Endothelial cell of umbilical vein (primary cell): ENCODE measurements at regions of chr2 and their contacts with region 1.

Region 1: GRCh38 chr2:159124441-159124911 is 156.0 kb downstream of the TANC1 start:
- DNase-seq: peak; percentile 92
- H3K4me3 ChIP-seq: no peak overlapping the region
- H3K27ac ChIP-seq: peak overlapping the region; percentile 84
- H3K4me1 ChIP-seq: peaks cover 35% of the 10 kb centered on the region
- H3K27me3 ChIP-seq: no peaks in the 10 kb centered on the region
- CTCF ChIP-seq: no peak
- POLR2A ChIP-seq: peak; percentile 52

Region 2: DNA sequence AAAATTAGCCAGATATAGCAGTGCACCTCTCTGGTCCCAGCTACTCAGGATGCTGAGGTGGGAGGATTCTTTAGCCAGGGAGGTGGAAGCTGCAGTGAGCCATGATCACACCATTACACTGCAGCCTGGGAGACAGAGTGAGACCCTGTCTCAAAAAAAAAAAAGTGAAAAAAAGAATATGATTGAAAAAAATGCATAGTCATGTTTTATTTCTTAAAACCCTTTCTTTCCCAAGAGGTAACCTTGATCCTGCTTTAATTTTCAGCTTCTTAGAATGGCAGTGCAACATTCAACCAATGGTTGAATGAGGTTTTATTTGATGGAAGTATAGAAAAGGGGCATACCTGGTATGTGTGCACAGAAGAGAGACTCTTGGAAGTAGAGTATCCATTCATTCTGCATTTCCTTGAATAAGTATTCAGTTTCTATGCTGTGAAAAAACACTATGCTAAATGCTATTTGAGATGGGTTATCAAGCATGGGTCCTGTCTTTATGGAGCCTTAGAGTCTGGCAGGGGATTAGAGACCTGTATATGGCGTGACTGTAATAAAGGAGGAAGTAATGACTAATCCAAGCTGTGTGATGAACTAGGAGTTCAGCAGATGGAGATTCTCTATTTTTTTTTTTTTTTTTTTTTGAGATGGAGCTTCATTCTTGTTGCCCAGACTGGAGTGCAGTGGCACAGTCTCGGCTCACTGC is 15.7 kb after region 1 on chr2:
- CTCF ChIA-PET with region 1: interaction called, 21 read pairs
- POLR2A ChIA-PET with region 1: interaction called, 4 read pairs
- dilution Hi-C with region 1: no loop called
- intact Hi-C with region 1: no loop called
- DNase-seq: peak; percentile 87
- H3K4me3 ChIP-seq: no peak overlapping the region
- H3K27ac ChIP-seq: peak overlapping the region; percentile 93
- H3K4me1 ChIP-seq: peaks cover 60% of the 10 kb centered on the region
- H3K27me3 ChIP-seq: no peaks in the 10 kb centered on the region
- CTCF ChIP-seq: no peak
- POLR2A ChIP-seq: peak; percentile 34

Region 3: DNA sequence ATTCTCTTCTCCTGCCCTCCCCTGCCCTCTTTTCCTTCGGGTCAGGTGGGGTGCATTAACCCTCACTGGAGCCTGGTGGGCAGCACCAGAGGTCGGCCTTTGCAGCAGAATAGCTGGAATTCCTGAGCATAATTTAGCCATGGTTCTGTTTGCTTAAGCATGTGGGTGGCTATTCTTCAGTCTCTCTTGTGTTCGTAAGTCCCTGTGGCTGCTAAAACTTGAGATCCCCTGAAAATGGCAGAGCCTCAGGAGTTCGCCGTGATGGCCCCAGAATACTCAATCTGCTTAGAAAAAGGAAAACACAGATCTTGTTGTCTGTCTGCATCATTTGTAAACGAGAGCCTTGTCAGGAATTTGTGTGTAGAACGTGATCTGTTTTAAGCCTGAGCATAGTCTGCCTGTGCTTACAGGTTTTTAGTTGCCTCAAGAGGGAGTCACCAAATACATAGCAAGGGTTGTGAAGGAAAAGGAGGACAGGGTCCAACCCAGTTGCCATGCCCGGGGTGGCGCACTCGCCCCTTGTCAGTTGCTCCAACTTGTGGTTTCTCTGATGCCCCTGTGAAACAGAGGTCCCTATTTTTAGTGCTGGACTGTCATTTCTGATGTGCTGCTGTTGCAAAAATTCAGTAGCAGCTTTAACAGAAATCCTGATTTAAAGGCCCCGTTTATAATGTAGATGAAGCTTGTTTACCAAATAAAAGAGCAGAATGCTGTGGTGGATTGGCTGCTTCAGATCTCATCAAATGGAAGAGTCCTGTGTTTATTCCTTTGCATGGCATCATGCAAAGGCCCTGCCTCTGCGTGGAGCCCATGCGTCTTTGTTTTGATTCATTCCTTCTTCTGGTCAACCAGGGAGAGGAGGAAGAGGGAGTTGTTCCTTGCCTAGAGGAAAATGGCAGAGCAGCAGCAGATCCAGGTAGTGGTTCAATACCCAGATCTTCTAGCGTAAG is 87.2 kb after region 1 on chr2:
- CTCF ChIA-PET with region 1: no interaction called
- POLR2A ChIA-PET with region 1: no interaction called
- dilution Hi-C with region 1: no loop called
- intact Hi-C with region 1: no loop called
- DNase-seq: no peak
- H3K4me3 ChIP-seq: no peak overlapping the region
- H3K27ac ChIP-seq: no peak overlapping the region
- H3K4me1 ChIP-seq: no peaks in the 10 kb centered on the region
- H3K27me3 ChIP-seq: no peaks in the 10 kb centered on the region
- CTCF ChIP-seq: no peak
- POLR2A ChIP-seq: no peak